ENCODE measurements at regions of chr5 and their contacts with region 1.

Region 1: GRCh38 chr5:10592598-10592997 is 28.7 kb downstream of the ANKRD33B start:
- DNase-seq: no peak
- H3K4me3 ChIP-seq: no peak overlapping the region
- H3K27ac ChIP-seq: no peak overlapping the region
- H3K27me3 ChIP-seq: no peaks in the 10 kb centered on the region
- CTCF ChIP-seq: no peak

Region 2: DNA sequence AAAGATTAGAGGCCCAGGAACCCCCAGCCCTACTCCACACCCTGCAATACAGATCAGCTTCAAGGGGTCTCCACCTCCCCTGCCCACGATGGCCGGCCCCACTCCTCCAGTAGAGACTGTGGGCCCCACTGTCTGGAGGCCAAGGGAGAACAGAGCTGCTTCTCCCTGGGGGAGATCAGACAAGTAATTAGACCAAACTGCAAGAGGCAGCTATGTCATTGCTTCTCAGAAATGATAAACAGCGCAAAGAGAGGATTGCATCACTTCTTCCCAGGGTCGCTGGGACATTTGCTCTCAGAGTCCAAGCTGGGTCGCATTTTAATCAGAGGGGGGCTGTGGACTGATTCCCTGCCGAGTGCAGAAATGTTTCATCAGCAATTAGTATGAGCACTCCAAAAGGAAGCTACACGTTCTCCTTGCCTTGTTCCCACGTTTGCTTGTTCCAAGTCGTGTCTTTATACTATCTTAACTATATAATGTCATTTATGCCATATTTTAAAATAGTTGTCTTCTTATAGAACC is 91.0 kb before region 1 on chr5:
- CTCF ChIA-PET with region 1: no interaction called
- POLR2A ChIA-PET with region 1: interaction called, 11 read pairs
- DNase-seq: no peak
- H3K4me3 ChIP-seq: no peak overlapping the region
- H3K27ac ChIP-seq: no peak overlapping the region
- H3K27me3 ChIP-seq: no peaks in the 10 kb centered on the region
- CTCF ChIP-seq: no peak

Region 3: GRCh38 chr5:10577371-10578292 is 15.0 kb before region 1 on chr5:
- CTCF ChIA-PET with region 1: no interaction called
- POLR2A ChIA-PET with region 1: no interaction called
- DNase-seq: no peak
- H3K4me3 ChIP-seq: no peak overlapping the region
- H3K27ac ChIP-seq: no peak overlapping the region
- H3K27me3 ChIP-seq: no peaks in the 10 kb centered on the region
- CTCF ChIP-seq: no peak

Measured in AG04450 (cell line).